Gastrocnemius medialis (tissue), 4 donors: ENCODE measurements at regions of chr2 and their contacts with region 1.

Region 1: GRCh38 chr2:55050133-55050994 is at the start of gene RTN4:
- DNase-seq: peak; percentile 98 to 99
- ATAC-seq: peak; percentile 92 to 94
- H3K4me3 ChIP-seq: peak within 1 kb of the TSS; percentile 75 to 92 (median 87)
- H3K27ac ChIP-seq: peak within 1 kb of the TSS; percentile 94 to 98 (median 96)
- H3K4me1 ChIP-seq: peaks cover 14 to 18% of the 10 kb centered on the region in 2 donors
- H3K27me3 ChIP-seq: peaks cover 0 to 8% (median 0%) of the 10 kb centered on the region in 3 donors
- CTCF ChIP-seq: peak in 3 of 5 experiments; percentile 5 to 23 (median 22)
- POLR2A ChIP-seq: peak; percentile 95 to 96
- total RNA-seq, gene RTN4: 183 to 259 (median 244) TPM

Region 2: GRCh38 chr2:54723131-54723995 is 327.0 kb before region 1 on chr2 and contains the start of gene EML6:
- in situ Hi-C with region 1: loop called in 1 of 4 experiments (anchors 25 kb)
- intact Hi-C with region 1: no loop called
- DNase-seq: peak; percentile 97 to 98
- ATAC-seq: peak; percentile 96 to 98
- H3K4me3 ChIP-seq: peak within 1 kb of the TSS; percentile 60 to 88 (median 76)
- H3K27ac ChIP-seq: peak within 1 kb of the TSS; percentile 79 to 86 (median 82)
- H3K4me1 ChIP-seq: peaks cover 7 to 11% of the 10 kb centered on the region in 2 donors
- H3K27me3 ChIP-seq: no peaks in the 10 kb centered on the region
- CTCF ChIP-seq: peak in 3 of 5 experiments; percentile 6 to 35 (median 28)
- POLR2A ChIP-seq: peak; percentile 53 to 78
- total RNA-seq, gene EML6: 2.7 to 42.5 (median 11.9) TPM

Region 3: GRCh38 chr2:54966165-54966832 is 84.1 kb before region 1 on chr2:
- in situ Hi-C with region 1: no loop called
- intact Hi-C with region 1: loop called (anchors 5 kb)
- DNase-seq: peak; percentile 53 to 73
- ATAC-seq: peak; percentile 57 to 70
- H3K4me3 ChIP-seq: no peak overlapping the region
- H3K27ac ChIP-seq: peak overlapping the region; percentile 89 to 93 (median 91)
- H3K4me1 ChIP-seq: peaks cover 65 to 88% of the 10 kb centered on the region in 2 donors
- H3K27me3 ChIP-seq: no peaks in the 10 kb centered on the region
- CTCF ChIP-seq: no peak
- POLR2A ChIP-seq: peak in 1 of 2 donors; percentile 18

Region 4: DNA sequence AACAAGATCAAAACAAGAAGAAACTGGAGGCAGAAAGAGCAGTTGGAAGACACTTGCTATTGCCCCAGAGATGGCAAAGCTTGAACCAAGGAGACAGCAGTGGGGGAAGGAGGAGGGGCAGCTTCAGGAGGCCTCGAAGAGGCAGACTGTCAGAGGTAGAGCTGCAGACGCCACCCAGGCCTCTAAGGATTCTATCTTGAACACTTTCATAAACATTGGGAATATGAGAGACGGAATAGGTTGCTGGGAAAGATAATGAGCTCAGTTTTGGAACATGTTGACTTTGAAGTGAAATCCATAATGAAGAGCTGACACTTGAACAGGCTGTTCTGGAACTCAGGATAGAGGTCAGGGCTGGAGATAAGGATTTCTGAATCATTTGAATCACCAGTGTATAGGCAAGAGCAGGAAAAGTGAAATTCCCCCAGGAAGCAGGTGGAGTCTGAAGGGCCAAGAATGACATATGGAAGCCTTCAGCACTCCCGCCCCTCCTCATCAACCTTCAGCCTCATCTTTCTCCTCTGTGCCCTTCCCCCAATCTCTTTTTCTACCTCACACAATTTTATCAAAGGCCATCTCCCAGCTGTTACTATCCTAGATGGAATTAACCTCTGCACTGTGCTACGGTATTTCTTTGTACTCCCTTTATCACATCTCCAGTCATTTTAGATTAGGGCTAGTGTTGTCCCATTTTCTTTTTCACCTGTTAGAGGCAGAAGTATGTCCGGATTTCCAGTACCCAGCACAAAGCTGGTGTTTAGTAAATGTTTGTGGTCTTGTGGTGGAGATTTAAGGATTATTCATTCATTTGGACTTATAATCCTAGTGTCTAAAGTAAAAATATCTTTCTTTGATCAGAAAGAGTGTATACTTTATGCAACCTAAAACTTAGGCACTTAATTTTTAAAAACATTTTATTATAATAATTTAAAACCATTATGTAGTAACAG is 47.4 kb after region 1 on chr2:
- in situ Hi-C with region 1: no loop called
- intact Hi-C with region 1: loop called (anchors 2 kb)
- DNase-seq: peak in 1 of 2 donors; percentile 39
- ATAC-seq: peak in 1 of 2 donors; percentile 62
- H3K4me3 ChIP-seq: no peak overlapping the region
- H3K27ac ChIP-seq: peak overlapping the region; percentile 27 to 77 (median 60)
- H3K4me1 ChIP-seq: peaks cover 38 to 42% of the 10 kb centered on the region in 2 donors
- H3K27me3 ChIP-seq: no peaks in the 10 kb centered on the region
- CTCF ChIP-seq: no peak
- POLR2A ChIP-seq: no peak

Region 5: DNA sequence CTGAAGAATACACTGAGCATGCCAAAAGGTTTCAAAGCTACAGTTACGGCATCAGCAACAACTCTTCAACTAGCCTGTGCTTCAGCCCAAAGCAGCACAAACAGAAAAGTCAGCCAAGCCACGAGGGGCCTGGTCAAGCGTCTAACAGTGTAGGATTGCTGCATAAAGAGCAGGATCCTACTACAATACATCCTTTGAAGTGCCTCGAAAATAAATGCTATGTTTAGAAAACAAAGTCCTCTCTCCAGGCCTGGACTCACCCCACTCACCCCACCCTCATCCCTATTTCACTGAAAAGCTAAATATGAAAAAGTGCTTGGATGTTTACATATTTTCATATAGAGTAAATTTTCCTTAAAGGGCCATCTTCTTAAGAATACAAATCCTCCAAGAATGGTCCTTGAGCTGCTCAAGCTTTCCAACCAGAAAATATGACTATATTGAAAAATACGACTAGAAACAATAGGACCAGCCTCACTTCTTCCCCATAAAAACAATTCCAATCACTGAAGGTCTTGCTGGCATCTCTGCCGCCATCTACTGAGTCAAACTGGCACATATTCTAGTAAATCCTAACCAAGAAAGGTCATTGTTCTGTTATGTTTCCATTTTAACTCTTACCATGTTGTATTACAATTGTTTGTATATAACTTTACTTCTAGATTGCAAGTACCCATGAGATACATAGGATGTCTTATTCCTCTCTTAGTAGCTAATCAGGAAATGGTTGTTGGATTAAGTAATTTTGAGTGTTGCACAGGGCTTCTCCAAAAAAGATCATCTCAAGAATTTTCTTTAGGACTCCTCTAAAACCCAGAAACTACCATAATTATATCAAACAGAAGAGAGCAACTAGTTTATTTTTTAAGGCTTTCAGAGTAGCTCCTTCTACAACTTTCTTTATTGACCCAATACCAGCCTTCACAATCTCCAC is 118.1 kb after region 1 on chr2:
- in situ Hi-C with region 1: loop called in 1 of 4 experiments (anchors 10 kb)
- intact Hi-C with region 1: loop called (anchors 2 kb)
- DNase-seq: peak in 1 of 2 donors; percentile 41
- ATAC-seq: peak; percentile 75 to 79
- H3K4me3 ChIP-seq: no peak overlapping the region
- H3K27ac ChIP-seq: peak overlapping the region in 1 of 4 donors; percentile 1
- H3K4me1 ChIP-seq: peaks cover 0 to 8% of the 10 kb centered on the region in 2 donors
- H3K27me3 ChIP-seq: no peaks in the 10 kb centered on the region
- CTCF ChIP-seq: peak; percentile 26 to 56 (median 52)
- POLR2A ChIP-seq: no peak

Region 6: GRCh38 chr2:55419679-55420438 is 369.5 kb after region 1 on chr2 and contains the start of gene CCDC88A:
- in situ Hi-C with region 1: loop called in 1 of 4 experiments (anchors 25 kb)
- intact Hi-C with region 1: no loop called
- DNase-seq: peak; percentile 90 to 95
- ATAC-seq: peak; percentile 88 to 92
- H3K4me3 ChIP-seq: peak within 1 kb of the TSS; percentile 91 to 99 (median 96)
- H3K27ac ChIP-seq: peak within 1 kb of the TSS; percentile 89 to 94 (median 91)
- H3K4me1 ChIP-seq: peaks cover 23 to 27% of the 10 kb centered on the region in 2 donors
- H3K27me3 ChIP-seq: no peaks in the 10 kb centered on the region
- CTCF ChIP-seq: peak; percentile 31 to 41 (median 35)
- POLR2A ChIP-seq: peak; percentile 69 to 76
- total RNA-seq, gene CCDC88A: 12.9 to 28.7 (median 19.4) TPM

Region 7: GRCh38 chr2:55923091-55923981 is 873.0 kb after region 1 on chr2 and contains the start of gene EFEMP1:
- in situ Hi-C with region 1: no loop called
- intact Hi-C with region 1: no loop called
- DNase-seq: peak; percentile 16 to 20
- ATAC-seq: peak in 1 of 2 donors; percentile 53
- H3K4me3 ChIP-seq: peak within 1 kb of the TSS; percentile 49 to 55 (median 51)
- H3K27ac ChIP-seq: peak within 1 kb of the TSS in 2 of 4 donors; percentile 32 to 41
- H3K4me1 ChIP-seq: peaks cover 3 to 8% of the 10 kb centered on the region in 2 donors
- H3K27me3 ChIP-seq: peaks cover 9 to 23% (median 22%) of the 10 kb centered on the region in 3 donors
- CTCF ChIP-seq: no peak
- POLR2A ChIP-seq: peak in 1 of 2 donors; percentile 57
- total RNA-seq, gene EFEMP1: 1.5 to 30.1 (median 20.8) TPM